Sciatic nerve (tissue), 2 donors: ENCODE measurements at regions of chr20 and their contacts with region 1.

Region 1: DNA sequence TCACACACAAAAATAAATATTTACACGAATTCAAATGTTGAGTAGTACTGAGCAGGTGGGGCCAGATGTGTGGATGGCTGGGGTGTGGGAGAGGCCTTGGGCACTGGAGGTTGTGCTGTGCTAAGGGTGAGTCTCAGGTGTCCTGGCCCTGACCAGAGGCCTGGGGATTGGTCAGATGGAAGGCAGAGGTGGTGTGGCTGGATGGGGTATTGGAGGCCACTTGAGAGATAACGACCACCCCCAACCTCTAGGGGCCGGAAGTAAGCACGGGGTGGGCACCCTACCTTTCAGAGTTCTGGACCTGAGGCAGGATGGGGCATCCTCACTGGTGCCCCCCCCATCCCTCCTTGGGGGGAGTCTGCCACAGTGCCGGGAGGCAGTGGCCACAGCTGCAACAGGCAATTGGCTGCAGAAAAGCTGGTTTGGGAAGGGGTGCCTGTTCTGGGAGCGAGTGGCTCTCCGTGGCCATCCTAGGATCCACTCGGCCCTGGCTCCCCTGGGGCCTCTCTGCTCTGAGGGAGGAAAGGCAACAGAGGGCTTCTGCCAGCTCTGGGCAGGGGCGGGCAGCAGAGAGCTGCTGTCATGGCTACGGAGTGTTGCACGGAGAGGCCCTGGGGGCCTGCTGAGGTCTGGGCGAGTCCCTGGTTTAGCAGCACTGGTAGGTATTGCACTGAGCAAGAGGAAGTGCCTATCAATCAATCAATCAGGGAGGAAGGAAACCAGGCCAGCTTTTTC is 87.6 kb downstream of the ASXL1 start:
- DNase-seq: peak; percentile 58
- ATAC-seq: peak; percentile 29

Region 2: GRCh38 chr20:32404017-32404416 is 41.7 kb before region 1 on chr20:
- intact Hi-C with region 1: loop called (anchors 1 kb)
- DNase-seq: no peak
- ATAC-seq: no peak